CD4-positive, alpha-beta memory T cell (primary cell): ENCODE measurements at regions of chrX and their contacts with region 1.

Region 1: DNA sequence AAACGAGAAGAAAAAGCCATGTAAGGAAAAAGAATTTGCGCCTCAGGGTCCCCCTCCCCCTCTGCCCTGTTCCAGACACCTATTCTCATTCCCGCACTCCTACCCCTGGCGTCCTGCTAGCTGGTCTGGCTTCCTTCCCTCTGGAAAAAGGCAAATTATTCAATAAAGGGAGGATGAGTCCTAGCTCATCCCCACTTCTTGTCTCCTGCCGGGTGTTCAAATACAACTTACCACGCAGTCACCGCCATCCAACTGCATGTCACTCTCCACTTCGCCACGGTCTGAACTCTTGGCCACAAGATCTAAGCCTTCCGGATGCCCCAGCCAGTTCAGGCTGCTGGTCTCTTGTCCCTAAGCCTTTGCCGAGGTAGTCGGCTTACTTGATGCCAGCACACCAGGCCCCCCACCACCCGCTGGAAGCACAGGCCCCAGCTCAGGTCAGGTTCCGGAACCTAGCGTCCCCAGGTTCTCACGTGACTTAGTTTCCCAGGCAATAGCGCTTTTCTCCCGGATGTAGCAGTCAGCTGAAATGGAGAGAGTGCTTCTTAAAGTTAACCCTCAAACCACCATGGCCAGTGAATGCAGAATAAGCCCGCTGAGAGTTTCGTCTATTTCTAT is 209.6 kb upstream of the SPIN4 start:
- DNase-seq: peak; percentile 54 to 71 (median 61)
- H3K4me3 ChIP-seq: peak overlapping the region; percentile 69 to 88
- H3K4me3 Mint-ChIP-seq: peak overlapping the region; percentile 92 to 99 (median 97)
- H3K27ac ChIP-seq: peak overlapping the region; percentile 57
- H3K27ac Mint-ChIP-seq: peak overlapping the region; percentile 87 to 95 (median 93)
- H3K4me1 ChIP-seq: peaks cover 12% of the 10 kb centered on the region
- H3K4me1 Mint-ChIP-seq: peaks cover 10 to 35% (median 17%) of the 10 kb centered on the region in 4 donors
- H3K27me3 ChIP-seq: no peaks in the 10 kb centered on the region
- H3K27me3 Mint-ChIP-seq: no peaks in the 10 kb centered on the region

Region 2: DNA sequence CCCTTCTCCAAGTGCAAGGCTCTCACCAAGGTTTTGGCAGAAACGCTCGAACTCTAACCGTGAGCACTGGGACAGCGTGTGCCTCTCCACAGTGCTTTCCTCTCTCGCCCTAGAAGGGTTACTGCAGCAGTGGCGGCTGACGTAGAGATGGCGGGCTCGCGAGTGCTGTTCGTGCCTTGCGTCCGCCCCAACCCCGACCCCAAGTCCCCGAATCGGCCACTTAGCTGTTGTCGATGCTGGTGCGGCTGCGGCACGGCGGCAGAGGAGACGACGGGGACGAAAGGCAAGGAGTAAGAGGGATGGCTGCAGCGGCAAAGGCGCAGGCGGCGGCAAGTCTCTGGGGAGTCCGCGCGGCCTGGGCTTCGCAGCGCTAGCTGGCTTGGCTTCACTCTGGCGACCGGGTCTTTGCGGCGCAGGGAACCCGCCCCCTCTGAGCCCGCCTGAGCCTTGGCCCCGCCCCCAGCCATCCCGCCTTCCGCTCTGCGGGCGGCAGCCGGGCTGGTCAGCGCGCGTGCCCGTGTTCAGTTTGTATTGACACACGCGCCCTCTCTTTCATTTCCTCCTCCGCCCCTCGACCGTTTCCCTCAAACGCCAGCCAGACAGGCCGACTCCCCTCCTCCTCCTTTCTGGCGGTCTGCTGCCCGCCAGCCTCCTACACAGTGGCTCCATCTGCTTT is 209.6 kb before region 1 on chrX and contains the start of gene SPIN4:
- CTCF ChIA-PET with region 1: no interaction called
- POLR2A ChIA-PET with region 1: interaction called, 5 read pairs
- intact Hi-C with region 1: loop called (anchors 5 kb)
- DNase-seq: peak; percentile 40 to 47 (median 43)
- H3K4me3 ChIP-seq: peak within 1 kb of the TSS; percentile 40 to 63
- H3K4me3 Mint-ChIP-seq: peak within 1 kb of the TSS; percentile 83 to 95 (median 92)
- H3K27ac ChIP-seq: peak within 1 kb of the TSS; percentile 37
- H3K27ac Mint-ChIP-seq: peak within 1 kb of the TSS; percentile 74 to 89 (median 86)
- H3K4me1 ChIP-seq: peaks cover 15% of the 10 kb centered on the region
- H3K4me1 Mint-ChIP-seq: peaks cover 8 to 29% (median 16%) of the 10 kb centered on the region in 4 donors
- H3K27me3 ChIP-seq: no peaks in the 10 kb centered on the region
- H3K27me3 Mint-ChIP-seq: no peaks in the 10 kb centered on the region
- total RNA-seq, gene SPIN4: 3.8 to 4.2 TPM

Region 3: GRCh38 chrX:63613531-63614028 is 52.9 kb after region 1 on chrX:
- CTCF ChIA-PET with region 1: no interaction called
- POLR2A ChIA-PET with region 1: no interaction called
- intact Hi-C with region 1: no loop called
- DNase-seq: no peak
- H3K4me3 ChIP-seq: no peak overlapping the region
- H3K4me3 Mint-ChIP-seq: no peak overlapping the region
- H3K27ac ChIP-seq: no peak overlapping the region
- H3K27ac Mint-ChIP-seq: no peak overlapping the region
- H3K4me1 ChIP-seq: no peaks in the 10 kb centered on the region
- H3K4me1 Mint-ChIP-seq: no peaks in the 10 kb centered on the region
- H3K27me3 ChIP-seq: no peaks in the 10 kb centered on the region
- H3K27me3 Mint-ChIP-seq: no peaks in the 10 kb centered on the region